CD14-positive monocyte (primary cell): ENCODE measurements at regions of chr2 and their contacts with region 1.

Region 1: DNA sequence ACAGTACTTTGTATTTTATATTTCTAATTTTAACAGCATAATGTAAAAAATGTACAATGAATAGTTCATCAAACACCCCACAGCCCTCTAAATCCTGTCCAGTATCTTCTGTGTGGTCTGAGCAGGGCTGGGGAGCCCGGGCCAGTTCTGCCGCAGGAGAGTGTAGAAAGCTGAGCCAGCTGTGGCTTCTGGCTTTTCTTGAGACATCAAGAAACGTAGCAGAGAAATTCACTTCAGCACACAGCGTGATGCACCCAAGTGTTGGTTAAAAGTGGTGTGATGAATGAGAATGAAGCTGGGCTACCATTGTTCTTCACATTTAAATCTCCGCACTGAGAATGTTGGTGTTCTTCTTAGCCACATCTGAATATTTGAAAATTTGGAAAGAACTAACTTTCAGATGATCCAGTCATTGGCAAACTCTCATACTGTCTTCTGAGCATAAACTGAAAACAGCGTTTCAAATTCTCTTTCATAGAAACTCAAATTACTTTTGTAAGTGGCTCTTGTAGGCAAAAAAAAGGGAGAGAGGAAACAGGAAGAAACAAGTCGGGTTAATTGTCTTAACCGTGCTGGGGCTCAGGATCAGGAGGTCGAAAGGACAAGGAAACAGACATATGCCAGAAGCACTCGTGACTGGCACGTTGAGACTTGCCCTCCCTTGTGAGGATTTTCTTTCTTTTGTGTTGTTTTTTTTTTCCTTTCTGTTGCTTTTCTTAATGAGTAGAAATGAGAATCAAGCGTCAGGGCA is 23.4 kb upstream of the TMEM87B start:
- DNase-seq: peak; percentile 29 to 46 (median 39)
- H3K4me3 ChIP-seq: peak overlapping the region in 1 of 3 experiments; percentile 35
- H3K4me3 Mint-ChIP-seq: peak overlapping the region; percentile 3 to 70
- H3K27ac ChIP-seq: peak overlapping the region in 1 of 2 donors; percentile 86
- H3K27ac Mint-ChIP-seq: peak overlapping the region; percentile 33 to 97 (median 93)
- H3K4me1 ChIP-seq: peaks cover 33 to 34% of the 10 kb centered on the region in 2 donors
- H3K4me1 Mint-ChIP-seq: peaks cover 29% of the 10 kb centered on the region
- H3K27me3 ChIP-seq: no peaks in the 10 kb centered on the region
- H3K27me3 Mint-ChIP-seq: peaks cover 0 to 3% (median 0%) of the 10 kb centered on the region in 3 donors
- CTCF ChIP-seq: no peak

Region 2: GRCh38 chr2:111120253-111121027 is 911.2 kb before region 1 on chr2 and contains the start of gene BCL2L11:
- intact Hi-C with region 1: no loop called
- DNase-seq: peak; percentile 87 to 90 (median 88)
- H3K4me3 ChIP-seq: peak within 1 kb of the TSS; percentile 89 to 98 (median 97)
- H3K4me3 Mint-ChIP-seq: peak within 1 kb of the TSS; percentile 95 to 98
- H3K27ac ChIP-seq: peak within 1 kb of the TSS; percentile 85 to 90
- H3K27ac Mint-ChIP-seq: peak within 1 kb of the TSS; percentile 88 to 94 (median 93)
- H3K4me1 ChIP-seq: peaks cover 60 to 63% of the 10 kb centered on the region in 2 donors
- H3K4me1 Mint-ChIP-seq: peaks cover 51% of the 10 kb centered on the region
- H3K27me3 ChIP-seq: peaks cover 33 to 51% of the 10 kb centered on the region in 2 donors
- H3K27me3 Mint-ChIP-seq: peaks cover 49 to 58% (median 51%) of the 10 kb centered on the region in 3 donors
- CTCF ChIP-seq: no peak
- polyA plus RNA-seq, gene BCL2L11: 8.8 to 27.6 (median 20.4) TPM

Region 3: GRCh38 chr2:112006076-112006410 is 25.6 kb before region 1 on chr2:
- intact Hi-C with region 1: loop called in 1 of 2 experiments (anchors 2 kb)
- DNase-seq: peak; percentile 81 to 93 (median 93)
- H3K4me3 ChIP-seq: peak overlapping the region in 1 of 3 experiments; percentile 21
- H3K4me3 Mint-ChIP-seq: peak overlapping the region in 1 of 2 donors; percentile 26
- H3K27ac ChIP-seq: peak overlapping the region; percentile 78 to 79
- H3K27ac Mint-ChIP-seq: peak overlapping the region; percentile 93 to 98 (median 95)
- H3K4me1 ChIP-seq: peaks cover 82 to 92% of the 10 kb centered on the region in 2 donors
- H3K4me1 Mint-ChIP-seq: peaks cover 85% of the 10 kb centered on the region
- H3K27me3 ChIP-seq: no peaks in the 10 kb centered on the region
- H3K27me3 Mint-ChIP-seq: peaks cover 0 to 2% (median 0%) of the 10 kb centered on the region in 3 donors
- CTCF ChIP-seq: no peak